CD8-positive, alpha-beta T cell (primary cell): ENCODE measurements at regions of chr10 and their contacts with region 1.

Region 1: DNA sequence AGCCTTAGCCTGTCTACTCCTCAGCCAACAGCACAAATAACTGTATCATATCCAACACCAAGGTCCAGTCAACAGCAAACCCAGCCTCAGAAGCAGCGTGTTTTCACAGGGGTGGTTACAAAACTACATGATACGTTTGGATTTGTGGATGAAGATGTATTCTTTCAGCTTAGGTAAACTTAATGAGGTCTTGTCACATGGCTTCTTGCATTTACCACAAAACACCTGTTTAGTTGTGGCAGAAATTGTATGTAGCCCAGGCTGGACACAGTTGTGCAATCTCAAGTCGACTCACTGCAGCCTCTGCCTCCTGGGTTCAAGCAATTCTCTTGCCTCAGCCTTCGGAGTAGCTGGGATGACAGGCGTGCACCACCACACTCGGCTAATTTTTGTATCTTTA is 21.4 kb downstream of the CCAR1 start:
- DNase-seq: no peak
- ATAC-seq: no peak
- H3K4me3 ChIP-seq: no peak overlapping the region
- H3K4me3 Mint-ChIP-seq: no peak overlapping the region
- H3K27ac ChIP-seq: no peak overlapping the region
- H3K27ac Mint-ChIP-seq: no peak overlapping the region
- H3K4me1 ChIP-seq: no peaks in the 10 kb centered on the region
- H3K4me1 Mint-ChIP-seq: peaks cover 5% of the 10 kb centered on the region
- H3K27me3 ChIP-seq: no peaks in the 10 kb centered on the region
- H3K27me3 Mint-ChIP-seq: no peaks in the 10 kb centered on the region
- CTCF ChIP-seq: no peak

Region 2: GRCh38 chr10:68446179-68446578 is 296.2 kb before region 1 on chr10:
- CTCF ChIA-PET with region 1: no interaction called
- POLR2A ChIA-PET with region 1: no interaction called
- intact Hi-C with region 1: no loop called
- DNase-seq: no peak
- ATAC-seq: no peak
- H3K4me3 ChIP-seq: no peak overlapping the region
- H3K4me3 Mint-ChIP-seq: no peak overlapping the region
- H3K27ac ChIP-seq: no peak overlapping the region
- H3K27ac Mint-ChIP-seq: no peak overlapping the region
- H3K4me1 ChIP-seq: no peaks in the 10 kb centered on the region
- H3K4me1 Mint-ChIP-seq: no peaks in the 10 kb centered on the region
- H3K27me3 ChIP-seq: no peaks in the 10 kb centered on the region
- H3K27me3 Mint-ChIP-seq: no peaks in the 10 kb centered on the region
- CTCF ChIP-seq: no peak

Region 3: DNA sequence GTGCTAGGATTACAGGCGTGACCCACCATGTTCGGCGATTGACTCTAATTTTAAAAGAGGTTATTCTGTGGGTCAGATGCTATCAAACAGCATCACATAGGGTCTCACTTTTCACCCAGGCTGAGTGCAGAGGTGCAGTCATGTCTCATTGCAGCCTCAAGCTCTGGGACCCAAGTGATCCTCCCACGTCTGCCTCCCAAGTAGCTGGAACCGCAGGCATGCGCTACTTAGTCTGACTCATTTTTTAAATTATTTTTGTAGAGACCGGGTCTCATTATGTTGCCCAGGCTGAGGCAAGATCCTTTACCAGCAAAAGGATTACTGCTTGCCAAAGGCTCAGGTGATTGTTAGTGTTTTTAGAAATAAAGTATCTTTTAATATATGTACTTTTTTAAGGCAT is 42.1 kb after region 1 on chr10:
- CTCF ChIA-PET with region 1: no interaction called
- POLR2A ChIA-PET with region 1: no interaction called
- intact Hi-C with region 1: loop called in 1 of 2 experiments (anchors 1 kb)
- DNase-seq: peak in 1 of 9 experiments; percentile 11
- ATAC-seq: no peak
- H3K4me3 ChIP-seq: no peak overlapping the region
- H3K4me3 Mint-ChIP-seq: no peak overlapping the region
- H3K27ac ChIP-seq: no peak overlapping the region
- H3K27ac Mint-ChIP-seq: no peak overlapping the region
- H3K4me1 ChIP-seq: no peaks in the 10 kb centered on the region
- H3K4me1 Mint-ChIP-seq: no peaks in the 10 kb centered on the region
- H3K27me3 ChIP-seq: no peaks in the 10 kb centered on the region
- H3K27me3 Mint-ChIP-seq: no peaks in the 10 kb centered on the region
- CTCF ChIP-seq: no peak